Head of caudate nucleus (tissue), 42 donors: ENCODE measurements at regions of chr18 and their contacts with region 1.

Region 1: GRCh38 chr18:5015213-5015711 is 181.8 kb downstream of the AKAIN1 start:
- DNase-seq: no peak

Region 2: GRCh38 chr18:4960578-4960977 is 54.7 kb before region 1 on chr18:
- intact Hi-C with region 1: loop called (anchors 10 kb)
- DNase-seq: no peak